ENCODE measurements at regions of chr17 and their contacts with region 1.

Region 1: DNA sequence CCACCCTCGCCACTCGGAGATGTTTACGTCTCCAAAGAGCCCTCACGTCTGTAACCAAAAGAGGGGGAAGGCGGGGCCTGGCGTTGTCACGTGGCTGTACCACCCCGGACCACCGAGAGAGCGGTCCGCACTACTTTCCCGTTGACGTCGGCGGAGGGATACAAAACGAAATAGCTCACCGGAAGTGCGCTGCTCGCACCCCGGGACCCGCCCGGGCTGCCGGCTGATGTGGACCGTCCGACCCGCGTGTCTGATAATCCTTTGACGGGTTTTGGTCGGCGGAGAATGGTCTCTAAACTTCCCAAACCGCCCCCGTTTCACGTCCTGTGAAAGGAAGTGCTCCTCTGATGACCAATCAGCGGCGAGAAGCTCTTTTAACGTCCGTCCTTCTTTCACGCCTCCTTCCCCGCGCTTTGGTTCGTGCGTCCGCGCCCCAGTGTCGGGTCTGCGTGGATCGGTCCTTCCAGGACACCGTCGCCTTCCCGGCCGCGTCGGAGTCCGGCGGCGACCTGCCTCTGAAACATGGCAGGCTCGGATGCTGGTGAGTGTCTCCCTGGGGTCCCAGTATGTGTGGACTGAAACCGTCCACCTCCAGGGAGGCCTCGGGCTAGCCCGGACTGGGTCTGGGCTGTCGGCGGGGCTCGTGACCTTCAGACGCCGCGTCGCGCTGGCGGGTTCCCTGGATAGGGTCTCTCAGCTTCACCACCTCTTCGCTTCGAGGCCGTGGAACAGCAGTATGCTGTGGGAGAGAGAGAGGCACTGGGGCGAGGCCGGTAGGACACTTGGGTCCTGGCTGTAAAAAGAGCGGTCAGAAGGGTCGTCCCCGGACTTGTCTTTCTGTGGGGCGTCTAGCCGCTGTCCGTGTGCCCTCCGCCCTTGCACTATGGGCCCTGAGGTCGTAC is at the start of gene CEP95:
- DNase-seq: peak; percentile 89 to 98 (median 94)
- ATAC-seq: peak; percentile 44
- H3K4me3 ChIP-seq: peak within 1 kb of the TSS; percentile 90
- H3K4me3 Mint-ChIP-seq: peak within 1 kb of the TSS; percentile 99
- H3K27ac ChIP-seq: peak within 1 kb of the TSS; percentile 99 to 100
- H3K27ac Mint-ChIP-seq: peak within 1 kb of the TSS; percentile 99
- H3K4me1 ChIP-seq: peaks cover 28% of the 10 kb centered on the region
- H3K4me1 Mint-ChIP-seq: peaks cover 61% of the 10 kb centered on the region
- H3K27me3 ChIP-seq: no peaks in the 10 kb centered on the region
- H3K27me3 Mint-ChIP-seq: no peaks in the 10 kb centered on the region
- CTCF ChIP-seq: no peak
- total RNA-seq, gene CEP95: 256 to 269 TPM

Region 2: DNA sequence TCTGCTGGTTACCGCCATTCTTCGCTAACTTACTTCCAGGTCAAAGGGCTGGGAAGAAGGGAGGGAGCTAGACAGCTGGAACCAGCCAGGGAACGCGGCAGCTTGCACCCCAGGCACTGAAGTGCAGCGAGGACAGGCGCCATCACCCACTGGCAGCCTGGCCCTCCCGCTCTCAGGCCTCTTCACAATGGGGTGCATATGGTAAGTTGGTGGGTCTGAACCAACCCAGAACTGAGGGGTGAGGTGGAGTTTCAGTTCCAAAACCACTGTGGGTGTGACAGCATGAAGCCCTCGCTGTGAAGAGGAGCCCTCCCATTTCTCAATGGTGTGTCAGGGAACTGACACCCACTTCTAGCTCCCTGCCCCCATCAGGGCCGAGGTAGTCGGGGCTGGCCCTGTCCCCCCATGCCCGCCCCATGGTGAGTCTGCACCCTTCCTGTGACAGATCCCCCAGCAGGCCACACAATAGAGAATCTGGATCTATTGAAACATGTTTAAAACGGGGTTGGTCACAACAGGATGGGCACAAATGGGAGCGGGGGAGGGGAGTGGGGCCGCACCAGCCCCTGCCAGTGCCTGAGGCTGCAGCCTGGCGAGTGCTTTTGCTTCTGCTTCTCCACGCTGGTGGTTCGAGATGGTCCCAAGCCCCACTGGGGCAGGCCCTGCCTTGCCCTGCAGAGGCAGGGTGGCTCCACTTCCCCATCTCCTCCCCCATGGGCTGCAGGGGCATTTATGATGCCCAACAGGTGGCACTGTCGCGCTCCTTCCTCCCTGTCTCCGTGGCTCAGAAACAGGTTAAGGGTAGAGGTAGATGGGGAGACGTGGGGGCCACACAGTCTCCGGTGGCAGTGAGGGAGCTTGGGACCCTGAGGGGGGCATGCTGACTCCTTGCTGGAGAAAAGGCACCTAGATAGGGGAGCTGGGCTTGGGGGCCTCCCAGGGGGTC is 809.2 kb before region 1 on chr17:
- CTCF ChIA-PET with region 1: no interaction called
- POLR2A ChIA-PET with region 1: interaction called, 33 read pairs
- intact Hi-C with region 1: loop called in 1 of 2 experiments (anchors 5 kb)
- DNase-seq: peak; percentile 77 to 92 (median 84)
- ATAC-seq: peak; percentile 33
- H3K4me3 ChIP-seq: peak overlapping the region; percentile 98
- H3K4me3 Mint-ChIP-seq: peak overlapping the region; percentile 100
- H3K27ac ChIP-seq: peak overlapping the region; percentile 73 to 91
- H3K27ac Mint-ChIP-seq: peak overlapping the region; percentile 100
- H3K4me1 ChIP-seq: peaks cover 78% of the 10 kb centered on the region
- H3K4me1 Mint-ChIP-seq: peaks cover 74% of the 10 kb centered on the region
- H3K27me3 ChIP-seq: no peaks in the 10 kb centered on the region
- H3K27me3 Mint-ChIP-seq: peaks cover 5% of the 10 kb centered on the region
- CTCF ChIP-seq: peak; percentile 82

Region 3: GRCh38 chr17:64020056-64020766 is 486.6 kb before region 1 on chr17 and contains the start of gene ICAM2:
- CTCF ChIA-PET with region 1: no interaction called
- POLR2A ChIA-PET with region 1: interaction called, 50 read pairs
- intact Hi-C with region 1: loop called in 1 of 2 experiments (anchors 10 kb)
- DNase-seq: peak; percentile 82 to 99 (median 86)
- ATAC-seq: peak; percentile 69
- H3K4me3 ChIP-seq: peak within 1 kb of the TSS; percentile 97
- H3K4me3 Mint-ChIP-seq: peak within 1 kb of the TSS; percentile 99
- H3K27ac ChIP-seq: peak within 1 kb of the TSS; percentile 98 to 99
- H3K27ac Mint-ChIP-seq: peak within 1 kb of the TSS; percentile 100
- H3K4me1 ChIP-seq: peaks cover 70% of the 10 kb centered on the region
- H3K4me1 Mint-ChIP-seq: peaks cover 82% of the 10 kb centered on the region
- H3K27me3 ChIP-seq: no peaks in the 10 kb centered on the region
- H3K27me3 Mint-ChIP-seq: no peaks in the 10 kb centered on the region
- CTCF ChIP-seq: no peak
- total RNA-seq, gene ICAM2: 50.6 to 54.7 TPM

Region 4: DNA sequence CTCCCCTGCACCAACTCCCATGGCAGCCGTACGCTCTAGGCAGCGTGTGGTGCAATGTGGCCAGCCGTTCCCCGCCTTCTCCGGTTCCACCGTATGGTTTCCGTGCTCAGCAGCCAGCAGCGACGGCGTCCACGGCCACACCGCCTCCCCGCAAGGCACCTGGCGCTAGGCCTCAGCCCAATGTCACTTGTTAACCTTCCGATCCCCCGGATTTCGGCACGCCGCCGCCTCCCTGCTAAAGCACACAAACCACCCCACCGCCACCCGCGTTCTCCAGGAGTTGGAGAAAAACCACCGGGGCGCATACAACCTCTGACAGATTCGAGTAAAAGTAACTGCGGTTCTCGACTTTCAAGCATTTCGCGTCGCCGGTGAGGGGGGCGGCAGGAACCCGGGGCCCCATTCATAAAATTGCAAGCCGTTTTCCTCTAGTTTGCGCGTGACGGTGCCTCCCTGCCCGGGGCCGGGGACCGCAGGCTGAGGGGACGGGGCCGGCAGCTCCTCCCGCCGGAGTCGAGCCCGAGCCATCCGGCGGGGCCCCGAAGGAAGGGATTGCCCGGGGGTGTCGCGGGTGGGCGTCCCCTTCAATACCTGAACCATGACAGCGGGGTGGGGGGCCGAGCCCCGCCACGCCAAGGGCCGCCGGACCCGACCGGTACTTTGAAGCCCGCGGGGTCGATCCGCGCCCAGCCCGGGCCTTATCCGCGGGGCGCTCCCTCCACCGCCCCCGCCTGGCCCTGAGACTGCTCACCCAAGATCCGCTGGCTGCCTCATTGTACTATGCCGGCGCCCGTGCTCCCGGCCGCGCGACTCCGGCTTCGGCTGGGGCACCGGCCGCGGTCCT is 244.2 kb before region 1 on chr17 and contains the start of gene TEX2:
- CTCF ChIA-PET with region 1: interaction called, 3 read pairs
- POLR2A ChIA-PET with region 1: interaction called, 23 read pairs
- intact Hi-C with region 1: no loop called
- DNase-seq: peak; percentile 39 to 87 (median 60)
- ATAC-seq: peak; percentile 47
- H3K4me3 ChIP-seq: peak within 1 kb of the TSS; percentile 70
- H3K4me3 Mint-ChIP-seq: peak within 1 kb of the TSS; percentile 92
- H3K27ac ChIP-seq: peak within 1 kb of the TSS; percentile 70 to 86
- H3K27ac Mint-ChIP-seq: peak within 1 kb of the TSS; percentile 95
- H3K4me1 ChIP-seq: peaks cover 28% of the 10 kb centered on the region
- H3K4me1 Mint-ChIP-seq: peaks cover 46% of the 10 kb centered on the region
- H3K27me3 ChIP-seq: no peaks in the 10 kb centered on the region
- H3K27me3 Mint-ChIP-seq: peaks cover 6% of the 10 kb centered on the region
- CTCF ChIP-seq: no peak
- total RNA-seq, gene TEX2: 8.6 to 8.9 TPM

Region 5: DNA sequence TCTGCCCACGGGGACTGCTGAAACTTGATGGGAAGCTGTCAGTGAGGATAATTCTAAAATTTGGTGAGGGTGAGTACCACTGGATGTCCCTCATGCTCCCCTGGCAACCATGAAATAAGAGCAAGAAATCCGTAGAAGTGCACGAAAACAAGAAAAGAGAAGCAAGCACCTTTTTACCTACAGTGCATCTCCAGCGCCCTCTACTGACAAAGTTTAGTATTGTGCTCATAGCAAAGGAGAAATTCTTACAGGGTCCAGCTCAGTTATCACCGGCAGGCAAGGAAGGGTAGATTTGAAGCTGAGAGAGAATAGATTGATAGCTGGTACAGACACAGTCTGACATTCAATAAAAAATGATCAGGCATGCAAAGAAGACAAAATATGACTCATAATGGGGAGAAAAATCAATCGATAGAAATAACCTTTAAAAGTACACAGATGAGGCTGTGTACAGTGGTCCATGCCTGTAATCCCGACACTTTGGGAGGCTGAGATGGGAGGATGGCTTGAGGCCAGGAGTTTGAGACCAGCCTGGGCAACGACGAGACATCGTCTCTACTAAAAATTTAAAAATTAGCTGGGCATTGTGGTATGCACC is 215.5 kb before region 1 on chr17:
- CTCF ChIA-PET with region 1: no interaction called
- POLR2A ChIA-PET with region 1: no interaction called
- intact Hi-C with region 1: no loop called
- DNase-seq: no peak
- ATAC-seq: no peak
- H3K4me3 ChIP-seq: no peak overlapping the region
- H3K4me3 Mint-ChIP-seq: no peak overlapping the region
- H3K27ac ChIP-seq: no peak overlapping the region
- H3K27ac Mint-ChIP-seq: no peak overlapping the region
- H3K4me1 ChIP-seq: no peaks in the 10 kb centered on the region
- H3K4me1 Mint-ChIP-seq: no peaks in the 10 kb centered on the region
- H3K27me3 ChIP-seq: no peaks in the 10 kb centered on the region
- H3K27me3 Mint-ChIP-seq: no peaks in the 10 kb centered on the region
- CTCF ChIP-seq: no peak

Region 6: GRCh38 chr17:64420143-64420971 is 86.5 kb before region 1 on chr17:
- CTCF ChIA-PET with region 1: interaction called, 26 read pairs
- POLR2A ChIA-PET with region 1: interaction called, 103 read pairs
- intact Hi-C with region 1: loop called in 1 of 2 experiments (anchors 1 kb)
- DNase-seq: peak in 7 of 14 experiments; percentile 15 to 85 (median 44)
- ATAC-seq: peak; percentile 81
- H3K4me3 ChIP-seq: no peak overlapping the region
- H3K4me3 Mint-ChIP-seq: no peak overlapping the region
- H3K27ac ChIP-seq: no peak overlapping the region
- H3K27ac Mint-ChIP-seq: no peak overlapping the region
- H3K4me1 ChIP-seq: peaks cover 5% of the 10 kb centered on the region
- H3K4me1 Mint-ChIP-seq: peaks cover 5% of the 10 kb centered on the region
- H3K27me3 ChIP-seq: no peaks in the 10 kb centered on the region
- H3K27me3 Mint-ChIP-seq: no peaks in the 10 kb centered on the region
- CTCF ChIP-seq: peak; percentile 89

Region 7: GRCh38 chr17:64491034-64491859 is 15.6 kb before region 1 on chr17:
- CTCF ChIA-PET with region 1: interaction called, 40 read pairs
- POLR2A ChIA-PET with region 1: interaction called, 453 read pairs
- intact Hi-C with region 1: no loop called
- DNase-seq: peak in 13 of 14 experiments; percentile 22 to 78 (median 37)
- ATAC-seq: peak; percentile 75
- H3K4me3 ChIP-seq: no peak overlapping the region
- H3K4me3 Mint-ChIP-seq: no peak overlapping the region
- H3K27ac ChIP-seq: no peak overlapping the region
- H3K27ac Mint-ChIP-seq: no peak overlapping the region
- H3K4me1 ChIP-seq: peaks cover 23% of the 10 kb centered on the region
- H3K4me1 Mint-ChIP-seq: peaks cover 25% of the 10 kb centered on the region
- H3K27me3 ChIP-seq: no peaks in the 10 kb centered on the region
- H3K27me3 Mint-ChIP-seq: no peaks in the 10 kb centered on the region
- CTCF ChIP-seq: peak; percentile 69

Region 8: DNA sequence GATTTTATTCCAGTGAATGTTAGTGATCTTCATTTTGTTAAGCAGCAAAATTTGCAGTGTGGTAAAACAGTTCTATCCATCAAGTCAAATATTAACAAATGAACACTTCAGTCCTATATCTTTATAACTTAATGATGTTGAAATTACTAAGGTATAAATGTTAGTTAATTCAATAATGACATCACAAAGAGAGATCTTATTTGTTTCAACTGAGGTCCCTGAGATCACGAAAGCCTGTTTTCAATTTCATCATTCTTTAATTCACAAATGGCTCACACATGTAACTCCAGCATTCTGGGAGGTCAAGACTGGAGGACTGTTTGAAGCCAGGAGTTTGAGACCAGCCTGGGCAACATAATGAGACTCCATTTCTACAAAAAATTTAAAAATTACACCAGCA is 141.4 kb after region 1 on chr17:
- CTCF ChIA-PET with region 1: no interaction called
- POLR2A ChIA-PET with region 1: interaction called, 15 read pairs
- intact Hi-C with region 1: loop called in 1 of 2 experiments (anchors 5 kb)
- DNase-seq: no peak
- ATAC-seq: no peak
- H3K4me3 ChIP-seq: no peak overlapping the region
- H3K4me3 Mint-ChIP-seq: no peak overlapping the region
- H3K27ac ChIP-seq: no peak overlapping the region
- H3K27ac Mint-ChIP-seq: no peak overlapping the region
- H3K4me1 ChIP-seq: peaks cover 3% of the 10 kb centered on the region
- H3K4me1 Mint-ChIP-seq: peaks cover 59% of the 10 kb centered on the region
- H3K27me3 ChIP-seq: no peaks in the 10 kb centered on the region
- H3K27me3 Mint-ChIP-seq: no peaks in the 10 kb centered on the region
- CTCF ChIP-seq: no peak

Region 9: DNA sequence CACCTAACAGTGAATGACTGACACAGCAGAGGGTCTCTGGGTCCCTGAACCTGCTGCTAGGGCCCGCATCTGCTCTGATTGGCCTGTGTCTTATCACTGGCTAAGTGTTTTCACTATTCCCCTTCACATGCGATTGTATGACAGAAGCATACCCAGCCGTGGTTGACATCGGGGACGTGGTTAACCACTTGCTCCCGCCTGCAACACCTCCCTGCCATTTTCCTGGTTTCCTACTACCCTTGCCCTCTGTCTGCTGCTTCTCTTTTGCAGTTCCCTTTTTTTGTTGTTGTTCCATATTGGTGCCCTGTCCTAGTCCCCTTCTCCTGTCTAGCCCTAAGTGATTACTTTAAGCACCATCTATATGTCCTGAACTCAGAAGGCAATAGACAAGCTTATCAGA is 807.4 kb after region 1 on chr17:
- CTCF ChIA-PET with region 1: no interaction called
- POLR2A ChIA-PET with region 1: no interaction called
- intact Hi-C with region 1: no loop called
- DNase-seq: no peak
- ATAC-seq: no peak
- H3K4me3 ChIP-seq: no peak overlapping the region
- H3K4me3 Mint-ChIP-seq: no peak overlapping the region
- H3K27ac ChIP-seq: no peak overlapping the region
- H3K27ac Mint-ChIP-seq: no peak overlapping the region
- H3K4me1 ChIP-seq: no peaks in the 10 kb centered on the region
- H3K4me1 Mint-ChIP-seq: peaks cover 5% of the 10 kb centered on the region
- H3K27me3 ChIP-seq: peaks cover 0 to 7% of the 10 kb centered on the region in 2 experiments
- H3K27me3 Mint-ChIP-seq: peaks cover 23% of the 10 kb centered on the region
- CTCF ChIP-seq: no peak

Measured in CD4-positive, alpha-beta T cell (primary cell).